Body of pancreas (tissue), 4 donors: ENCODE measurements at regions of chr4 and their contacts with region 1.

Region 1: GRCh38 chr4:78962597-78963115 is 23.4 kb upstream of the PAQR3 start:
- DNase-seq: no peak
- ATAC-seq: no peak
- H3K4me3 ChIP-seq: no peak overlapping the region
- H3K27ac ChIP-seq: no peak overlapping the region
- H3K4me1 ChIP-seq: no peaks in the 10 kb centered on the region
- H3K27me3 ChIP-seq: no peaks in the 10 kb centered on the region
- CTCF ChIP-seq: no peak
- POLR2A ChIP-seq: no peak

Region 2: GRCh38 chr4:80215449-80216052 is 1252.9 kb after region 1 on chr4:
- intact Hi-C with region 1: loop called (anchors 10 kb)
- DNase-seq: no peak
- ATAC-seq: peak; percentile 59
- H3K4me3 ChIP-seq: no peak overlapping the region
- H3K27ac ChIP-seq: no peak overlapping the region
- H3K4me1 ChIP-seq: peaks cover 6% of the 10 kb centered on the region
- H3K27me3 ChIP-seq: no peaks in the 10 kb centered on the region
- CTCF ChIP-seq: peak; percentile 37 to 71 (median 69)
- POLR2A ChIP-seq: no peak